ENCODE measurements at regions of chr15 and their contacts with region 1.

Region 1: DNA sequence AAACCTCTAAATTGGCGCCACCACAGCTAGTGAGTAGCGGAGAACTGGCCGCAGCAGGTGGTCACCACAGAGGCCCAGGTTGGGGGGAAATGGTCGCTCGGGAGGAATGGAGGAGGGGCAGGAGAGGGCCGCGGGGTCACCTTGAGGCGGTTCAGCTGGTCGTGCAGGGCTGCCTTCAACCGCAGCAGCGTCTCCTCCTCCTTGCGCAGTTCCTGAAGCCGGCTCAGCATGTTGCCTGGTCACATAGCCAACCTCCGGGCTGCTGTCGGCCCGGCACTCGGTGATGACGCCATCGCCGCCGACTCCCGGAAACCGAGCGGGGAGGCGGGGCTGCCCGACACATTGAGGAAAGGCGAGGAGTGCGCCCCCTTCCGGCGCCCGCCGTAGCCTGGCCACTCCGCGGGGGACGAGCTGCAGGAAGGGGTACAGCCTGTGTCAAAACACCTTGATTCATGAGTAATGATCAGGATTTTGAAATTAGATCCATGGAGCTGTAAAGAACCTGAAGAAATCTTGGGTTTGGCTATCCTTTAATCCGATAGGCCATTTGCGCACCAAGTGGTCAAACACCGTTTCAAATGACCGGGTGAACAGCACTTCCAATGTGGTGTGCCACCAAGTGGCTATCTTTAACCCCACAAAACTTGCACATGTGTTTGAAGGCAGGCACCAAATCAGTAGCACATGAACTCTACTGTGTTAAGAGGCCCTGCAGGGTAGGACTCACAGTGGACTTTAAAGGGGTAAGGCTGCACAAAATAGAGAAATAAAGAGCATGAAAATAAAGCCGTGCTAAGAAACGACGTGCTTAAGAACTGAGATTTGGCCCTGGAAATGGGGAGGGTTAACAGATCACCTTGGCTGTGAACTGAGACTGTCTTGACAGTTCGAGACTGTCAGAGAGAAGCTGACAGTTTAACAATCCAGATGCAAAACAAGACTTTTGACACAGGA is at the start of gene SNAPC5:
- DNase-seq: peak; percentile 49
- H3K4me3 ChIP-seq: peak within 1 kb of the TSS; percentile 73
- H3K27me3 ChIP-seq: no peaks in the 10 kb centered on the region
- CTCF ChIP-seq: peak; percentile 95
- polyA plus RNA-seq, gene SNAPC5: 21.1 and 22.7 TPM in 2 replicates

Region 2: GRCh38 chr15:66386204-66387123 is 111.3 kb before region 1 on chr15 and contains the start of gene MAP2K1:
- CTCF ChIA-PET with region 1: interaction called, 82 read pairs
- POLR2A ChIA-PET with region 1: interaction called, 6 read pairs
- DNase-seq: peak; percentile 75
- H3K4me3 ChIP-seq: peak within 1 kb of the TSS; percentile 86
- H3K27me3 ChIP-seq: no peaks in the 10 kb centered on the region
- CTCF ChIP-seq: peak; percentile 88
- polyA plus RNA-seq, gene MAP2K1: 19.0 and 21.8 TPM in 2 replicates

Region 3: DNA sequence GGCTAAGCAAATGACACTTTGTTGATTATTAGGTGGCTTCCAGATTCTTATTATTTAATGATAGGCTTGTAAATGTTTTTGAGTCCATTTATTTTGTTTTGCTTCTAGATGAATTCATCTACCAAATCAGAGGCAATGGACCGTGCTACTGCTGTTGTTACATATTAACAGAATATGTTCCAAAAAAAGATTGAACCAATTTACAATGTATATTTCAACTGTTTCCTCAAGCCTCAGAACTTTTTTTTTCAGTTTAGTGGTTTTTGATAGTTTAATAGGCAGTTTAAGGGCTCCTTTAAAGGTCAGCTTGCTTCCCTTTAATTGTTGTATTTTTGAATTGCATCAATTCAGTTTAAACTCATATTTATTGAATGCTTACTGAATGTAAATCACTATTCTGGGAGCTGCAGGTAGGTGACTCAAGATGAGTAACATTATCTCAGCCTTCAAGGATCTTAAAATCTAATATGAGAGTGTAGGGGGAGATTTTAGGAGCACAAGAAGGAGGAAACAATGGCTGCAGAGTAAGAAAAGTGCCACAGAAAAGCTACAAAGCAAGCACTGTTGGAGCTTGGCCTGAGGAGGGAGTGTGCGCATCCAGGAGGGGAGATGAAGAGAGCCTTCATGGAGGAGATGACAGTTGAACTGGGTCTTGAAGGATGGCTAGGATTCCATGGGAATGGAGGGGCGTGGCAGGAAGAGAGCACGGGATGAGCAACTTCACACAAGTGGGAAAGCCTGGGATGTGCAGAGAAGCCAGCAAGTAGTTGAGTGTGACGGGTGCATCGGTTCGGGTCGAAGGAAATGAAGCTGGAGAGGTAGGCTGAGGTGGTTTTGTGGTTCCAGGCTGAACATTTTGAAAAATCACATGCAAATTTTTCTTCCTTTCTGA is 96.4 kb before region 1 on chr15:
- CTCF ChIA-PET with region 1: interaction called, 22 read pairs
- POLR2A ChIA-PET with region 1: no interaction called
- DNase-seq: no peak
- H3K4me3 ChIP-seq: no peak overlapping the region
- H3K27me3 ChIP-seq: no peaks in the 10 kb centered on the region
- CTCF ChIP-seq: no peak

Region 4: DNA sequence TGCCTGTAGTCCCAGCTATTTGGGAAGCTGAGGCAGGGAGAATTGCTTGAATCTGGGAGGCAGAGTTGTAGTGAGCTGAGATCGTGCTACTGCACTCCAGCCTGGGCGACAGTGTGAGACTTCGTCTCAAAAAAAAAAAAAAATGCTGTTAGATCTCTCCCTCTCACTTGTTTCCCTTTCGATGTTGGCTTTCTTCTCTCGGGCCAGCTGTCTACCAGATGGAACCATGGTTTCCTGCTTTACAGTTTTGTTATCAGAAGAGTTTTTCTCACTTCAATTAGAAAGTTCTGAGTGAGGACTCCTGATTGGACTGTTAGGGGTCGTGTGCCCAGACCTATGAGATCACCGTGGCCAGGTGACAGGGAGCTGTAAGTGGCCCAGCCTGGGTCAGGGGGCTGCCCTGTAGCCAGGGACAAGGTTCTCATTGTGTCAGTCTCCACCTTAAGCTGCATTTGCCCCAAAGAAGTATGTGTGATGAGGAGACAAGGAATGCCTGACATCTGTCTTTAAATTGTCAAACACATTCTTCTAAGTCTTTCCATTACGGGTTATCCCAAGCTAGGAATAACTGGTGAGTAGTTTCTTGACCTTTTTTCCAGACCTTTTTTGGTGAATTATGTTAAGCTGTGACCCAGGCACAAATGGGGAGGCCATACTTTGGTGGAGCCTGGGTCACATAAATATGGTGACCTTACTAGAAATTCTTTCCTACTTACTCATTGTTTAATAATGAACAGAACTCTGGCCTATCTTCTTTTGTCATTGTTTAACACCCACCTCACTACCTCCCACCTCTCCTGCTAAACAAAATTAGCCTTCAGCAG is 25.4 kb before region 1 on chr15:
- CTCF ChIA-PET with region 1: interaction called, 21 read pairs
- POLR2A ChIA-PET with region 1: interaction called, 3 read pairs
- DNase-seq: no peak
- H3K4me3 ChIP-seq: no peak overlapping the region
- H3K27me3 ChIP-seq: no peaks in the 10 kb centered on the region
- CTCF ChIP-seq: no peak

Region 5: GRCh38 chr15:66483131-66483566 is 14.6 kb before region 1 on chr15:
- CTCF ChIA-PET with region 1: interaction called, 49 read pairs
- POLR2A ChIA-PET with region 1: no interaction called
- DNase-seq: no peak
- H3K4me3 ChIP-seq: no peak overlapping the region
- H3K27me3 ChIP-seq: no peaks in the 10 kb centered on the region
- CTCF ChIP-seq: no peak

Region 6: GRCh38 chr15:66565741-66566144 is 68.0 kb after region 1 on chr15 and contains the start of gene LCTL:
- CTCF ChIA-PET with region 1: no interaction called
- POLR2A ChIA-PET with region 1: no interaction called
- DNase-seq: no peak
- H3K4me3 ChIP-seq: no peak within 1 kb of the TSS
- H3K27me3 ChIP-seq: no peaks in the 10 kb centered on the region
- CTCF ChIP-seq: no peak
- polyA plus RNA-seq, gene LCTL: 0.17 and 0.25 TPM in 2 replicates

Region 7: DNA sequence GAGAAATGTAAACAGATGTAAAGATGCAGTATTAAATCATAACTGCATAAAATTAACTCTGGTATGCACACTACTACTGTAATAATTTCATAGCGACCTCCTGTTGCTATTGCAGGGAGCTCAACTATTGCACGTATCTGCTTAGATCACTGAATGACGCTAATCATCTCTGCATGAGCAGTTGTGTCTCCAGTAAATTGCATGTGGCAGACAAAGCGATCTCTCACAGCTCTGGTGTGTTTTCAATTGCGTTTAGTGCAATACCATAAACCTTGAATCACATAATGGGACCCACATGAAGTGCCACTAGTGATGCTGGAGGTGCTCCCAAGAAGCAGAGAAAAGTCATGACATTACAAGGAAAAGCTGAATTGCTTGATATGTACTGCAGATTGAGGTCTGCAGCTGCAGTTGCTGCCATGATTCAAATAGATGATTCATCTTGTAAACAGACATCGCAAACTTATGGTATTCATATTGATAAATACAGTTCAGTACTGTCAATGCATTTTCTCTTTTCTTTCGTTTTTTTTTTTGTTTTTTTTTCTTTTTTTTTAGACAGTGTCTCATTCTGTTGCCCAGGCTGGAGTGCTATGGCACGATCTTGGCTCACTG is 98.3 kb after region 1 on chr15:
- CTCF ChIA-PET with region 1: no interaction called
- POLR2A ChIA-PET with region 1: no interaction called
- DNase-seq: no peak
- H3K4me3 ChIP-seq: no peak overlapping the region
- H3K27me3 ChIP-seq: peaks cover 12% of the 10 kb centered on the region
- CTCF ChIP-seq: no peak

Measured in BJ (cell line).